PC-9 (cell line): ENCODE measurements at regions of chr5 and their contacts with region 1.

Region 1: GRCh38 chr5:163564321-163564938 is 59.0 kb downstream of the MAT2B start:
- DNase-seq: peak in 1 of 2 experiments; percentile 39
- H3K4me3 ChIP-seq: no peak overlapping the region
- H3K27ac ChIP-seq: no peak overlapping the region
- H3K4me1 ChIP-seq: no peaks in the 10 kb centered on the region
- H3K27me3 ChIP-seq: peaks cover 65% of the 10 kb centered on the region
- CTCF ChIP-seq: peak; percentile 88

Region 2: GRCh38 chr5:163362840-163363788 is 201.3 kb before region 1 on chr5:
- CTCF ChIA-PET with region 1: no interaction called
- POLR2A ChIA-PET with region 1: no interaction called
- intact Hi-C with region 1: no loop called
- DNase-seq: no peak
- H3K4me3 ChIP-seq: no peak overlapping the region
- H3K27ac ChIP-seq: no peak overlapping the region
- H3K4me1 ChIP-seq: no peaks in the 10 kb centered on the region
- H3K27me3 ChIP-seq: peaks cover 11% of the 10 kb centered on the region; the same call in 1 of the 2 replicates
- CTCF ChIP-seq: no peak

Region 3: DNA sequence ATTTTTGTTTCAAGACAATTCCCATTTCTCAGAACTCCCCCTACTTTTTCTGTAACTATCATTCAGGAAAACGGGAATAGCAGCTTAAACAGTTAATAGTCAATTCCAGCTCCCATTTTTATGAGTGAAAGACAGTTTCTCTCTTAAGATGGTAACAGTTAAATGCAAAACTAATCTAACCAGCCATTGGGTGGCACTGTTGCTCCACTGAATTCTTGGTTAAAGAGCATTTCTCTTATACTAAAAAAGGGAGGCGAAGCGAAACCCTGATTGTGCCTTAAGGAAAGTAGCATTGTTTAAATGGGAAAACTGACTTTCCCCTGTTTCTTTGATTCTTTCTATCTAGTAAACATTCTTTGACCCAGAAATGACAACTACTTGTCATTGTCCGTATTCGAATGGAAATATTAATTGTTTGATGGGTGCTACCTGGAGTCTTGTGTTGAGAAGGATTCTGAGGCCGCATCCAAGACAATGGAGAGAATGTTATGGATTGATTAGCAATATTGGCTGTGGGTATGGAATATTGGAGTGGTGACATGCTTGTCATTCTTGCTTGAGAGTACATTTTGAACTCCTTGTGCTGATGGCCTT is 448.7 kb after region 1 on chr5:
- CTCF ChIA-PET with region 1: no interaction called
- POLR2A ChIA-PET with region 1: no interaction called
- intact Hi-C with region 1: loop called (anchors 5 kb)
- DNase-seq: peak; percentile 29 to 39
- H3K4me3 ChIP-seq: no peak overlapping the region
- H3K27ac ChIP-seq: no peak overlapping the region
- H3K4me1 ChIP-seq: no peaks in the 10 kb centered on the region
- H3K27me3 ChIP-seq: no peaks in the 10 kb centered on the region
- CTCF ChIP-seq: peak; percentile 80

Region 4: DNA sequence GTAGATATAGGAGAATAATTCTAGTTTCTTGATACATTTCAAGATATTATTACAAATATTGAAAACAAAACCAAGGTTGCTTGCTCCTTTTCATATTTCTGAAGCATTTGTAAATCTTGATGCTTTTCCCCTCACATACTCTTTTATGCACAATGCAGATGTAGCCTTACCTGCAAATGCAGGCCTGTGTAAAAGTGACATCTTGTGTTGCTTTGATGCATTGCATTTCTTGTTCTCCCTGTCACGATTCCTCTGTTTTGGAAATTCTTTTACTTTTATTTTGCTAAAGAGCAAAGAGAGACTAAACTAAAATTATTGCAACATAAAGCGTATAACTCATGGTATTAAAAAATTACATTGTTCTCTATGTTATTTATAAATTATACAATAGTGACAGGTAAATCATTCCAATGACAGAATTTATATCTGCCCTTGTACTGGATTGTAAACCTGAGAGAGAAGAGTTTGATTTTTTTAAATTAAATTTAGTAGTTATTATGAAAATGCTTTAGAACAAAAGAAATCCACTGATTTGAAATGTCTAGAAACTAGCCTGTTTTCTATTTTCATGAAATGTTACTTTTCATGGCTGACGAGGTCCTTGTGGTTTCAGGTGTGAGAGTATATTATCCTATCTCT is 911.0 kb after region 1 on chr5:
- CTCF ChIA-PET with region 1: no interaction called
- POLR2A ChIA-PET with region 1: no interaction called
- intact Hi-C with region 1: loop called (anchors 10 kb)
- DNase-seq: no peak
- H3K4me3 ChIP-seq: no peak overlapping the region
- H3K27ac ChIP-seq: no peak overlapping the region
- H3K4me1 ChIP-seq: no peaks in the 10 kb centered on the region
- H3K27me3 ChIP-seq: no peaks in the 10 kb centered on the region
- CTCF ChIP-seq: peak; percentile 49; the same call in 1 of the 2 replicates

Region 5: GRCh38 chr5:164504141-164504772 is 939.8 kb after region 1 on chr5:
- CTCF ChIA-PET with region 1: interaction called, 4 read pairs
- POLR2A ChIA-PET with region 1: no interaction called
- intact Hi-C with region 1: loop called (anchors 1 kb)
- DNase-seq: peak in 1 of 2 experiments; percentile 13
- H3K4me3 ChIP-seq: no peak overlapping the region
- H3K27ac ChIP-seq: no peak overlapping the region
- H3K4me1 ChIP-seq: no peaks in the 10 kb centered on the region
- H3K27me3 ChIP-seq: 0 out of 2 replicates have a peak, but pooled peaks cover 2% of the 10 kb centered on the region
- CTCF ChIP-seq: peak; percentile 78

Region 6: DNA sequence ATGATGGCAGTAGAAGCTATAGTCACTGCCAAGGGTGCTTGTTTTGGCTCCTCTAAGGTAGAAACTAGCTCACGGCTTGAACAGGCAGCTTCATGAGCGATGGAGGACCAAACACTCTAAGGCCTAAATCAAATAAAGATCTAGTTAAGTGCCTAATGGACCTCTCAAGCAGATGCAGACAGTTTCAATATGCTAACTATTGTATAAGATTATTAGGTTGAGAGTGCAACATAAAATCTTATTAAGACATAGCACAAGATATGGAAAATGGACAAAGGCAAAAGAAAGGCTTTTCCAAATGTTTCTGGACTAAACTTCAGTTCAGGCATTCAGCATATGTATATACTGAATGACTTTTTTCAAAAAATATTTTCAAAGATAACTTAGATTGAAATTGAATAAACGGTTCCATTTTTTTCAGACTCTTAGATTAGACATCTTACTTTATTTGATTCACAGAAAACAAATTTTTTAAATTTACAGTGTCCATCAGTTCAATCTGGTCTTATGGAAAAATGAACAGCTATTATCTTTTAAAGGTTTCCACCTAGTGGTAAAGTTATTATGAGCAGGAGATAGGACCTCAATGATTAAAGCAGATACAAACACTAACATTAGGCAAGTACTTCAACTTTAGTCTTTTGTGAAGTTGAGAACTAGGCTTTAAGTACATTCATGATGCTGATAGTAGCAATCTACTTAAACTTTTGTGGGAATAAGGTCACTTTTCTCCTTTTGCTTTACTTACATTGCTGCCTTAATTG is 1108.7 kb after region 1 on chr5:
- CTCF ChIA-PET with region 1: no interaction called
- POLR2A ChIA-PET with region 1: no interaction called
- intact Hi-C with region 1: loop called (anchors 1 kb)
- DNase-seq: no peak
- H3K4me3 ChIP-seq: no peak overlapping the region
- H3K27ac ChIP-seq: no peak overlapping the region
- H3K4me1 ChIP-seq: no peaks in the 10 kb centered on the region
- H3K27me3 ChIP-seq: no peaks in the 10 kb centered on the region
- CTCF ChIP-seq: peak; percentile 33

Region 7: GRCh38 chr5:165209086-165209727 is 1644.8 kb after region 1 on chr5:
- CTCF ChIA-PET with region 1: no interaction called
- POLR2A ChIA-PET with region 1: no interaction called
- intact Hi-C with region 1: loop called (anchors 2 kb)
- DNase-seq: no peak
- H3K4me3 ChIP-seq: no peak overlapping the region
- H3K27ac ChIP-seq: no peak overlapping the region
- H3K4me1 ChIP-seq: no peaks in the 10 kb centered on the region
- H3K27me3 ChIP-seq: no peaks in the 10 kb centered on the region
- CTCF ChIP-seq: peak; percentile 75